Mucosa of descending colon (tissue), 3 donors: ENCODE measurements at regions of chr10 and their contacts with region 1.

Region 1: GRCh38 chr10:88553116-88553752 is 29.9 kb downstream of the RNLS start:
- DNase-seq: peak in 2 of 3 donors; percentile 27 to 73
- ATAC-seq: peak; percentile 92
- H3K4me3 ChIP-seq: no peak overlapping the region
- H3K4me1 ChIP-seq: no peaks in the 10 kb centered on the region
- CTCF ChIP-seq: peak; percentile 51

Region 2: GRCh38 chr10:87842776-87843497 is 710.3 kb before region 1 on chr10:
- intact Hi-C with region 1: loop called (anchors 10 kb)
- DNase-seq: no peak
- ATAC-seq: peak; percentile 25
- H3K4me3 ChIP-seq: no peak overlapping the region
- H3K4me1 ChIP-seq: peaks cover 12% of the 10 kb centered on the region
- CTCF ChIP-seq: no peak

Region 3: GRCh38 chr10:88322324-88323063 is 230.7 kb before region 1 on chr10:
- intact Hi-C with region 1: no loop called
- DNase-seq: no peak
- ATAC-seq: no peak
- H3K4me3 ChIP-seq: no peak overlapping the region
- H3K4me1 ChIP-seq: no peaks in the 10 kb centered on the region
- CTCF ChIP-seq: no peak

Region 4: DNA sequence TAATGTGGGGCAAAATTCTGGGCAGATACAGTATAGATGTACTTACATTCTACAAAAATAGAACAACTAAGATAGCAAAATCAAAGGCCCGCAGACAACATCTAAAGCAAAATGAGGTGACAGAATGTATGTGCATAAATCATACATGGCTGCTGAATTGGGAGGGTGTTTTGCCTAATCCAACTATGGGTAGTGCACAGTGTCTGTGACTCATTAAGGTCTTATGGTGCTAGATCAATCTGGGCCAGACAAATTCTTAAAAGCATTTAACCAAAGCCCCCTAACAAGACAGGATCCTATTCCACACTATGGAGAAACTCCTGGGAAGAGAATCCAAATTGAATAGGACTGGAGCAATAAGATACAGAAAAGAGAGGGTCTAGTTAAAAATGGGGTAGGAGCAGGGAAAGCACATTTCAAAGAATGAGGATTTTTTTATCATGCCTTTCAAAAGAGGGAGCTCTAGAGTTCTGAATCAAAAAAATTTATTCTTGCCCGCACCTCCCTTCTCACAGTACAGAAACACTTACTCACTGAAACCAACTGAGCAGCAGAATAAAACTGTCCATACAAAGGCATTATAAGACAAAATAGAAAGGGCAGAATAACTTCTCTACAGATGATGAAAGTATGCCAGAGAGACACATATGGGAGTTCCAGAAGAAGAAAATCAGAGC is 151.4 kb before region 1 on chr10:
- intact Hi-C with region 1: loop called in 1 of 2 experiments (anchors 10 kb)
- DNase-seq: no peak
- ATAC-seq: no peak
- H3K4me3 ChIP-seq: no peak overlapping the region
- H3K4me1 ChIP-seq: no peaks in the 10 kb centered on the region
- CTCF ChIP-seq: no peak

Region 5: DNA sequence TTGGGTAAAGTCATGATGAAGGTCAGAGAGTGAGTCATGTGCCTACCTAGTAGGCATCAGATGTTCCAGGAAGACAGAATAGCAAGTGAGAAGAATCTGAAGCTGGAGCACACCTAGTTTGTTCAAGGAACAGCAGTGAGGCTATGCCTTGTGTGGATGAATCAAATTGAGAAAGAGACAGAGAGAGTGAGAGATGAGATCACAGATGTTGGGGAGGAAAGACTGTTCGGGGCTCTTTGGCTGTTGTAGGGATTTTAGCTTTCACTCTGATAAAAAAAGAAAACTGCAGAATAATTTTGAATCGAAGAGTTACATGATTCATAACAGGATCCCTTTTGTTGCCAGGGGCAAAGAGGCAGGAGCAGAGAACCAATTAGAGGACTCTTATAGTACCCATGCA is 117.3 kb after region 1 on chr10:
- intact Hi-C with region 1: no loop called
- DNase-seq: no peak
- ATAC-seq: no peak
- H3K4me3 ChIP-seq: no peak overlapping the region
- H3K4me1 ChIP-seq: no peaks in the 10 kb centered on the region
- CTCF ChIP-seq: no peak

Region 6: DNA sequence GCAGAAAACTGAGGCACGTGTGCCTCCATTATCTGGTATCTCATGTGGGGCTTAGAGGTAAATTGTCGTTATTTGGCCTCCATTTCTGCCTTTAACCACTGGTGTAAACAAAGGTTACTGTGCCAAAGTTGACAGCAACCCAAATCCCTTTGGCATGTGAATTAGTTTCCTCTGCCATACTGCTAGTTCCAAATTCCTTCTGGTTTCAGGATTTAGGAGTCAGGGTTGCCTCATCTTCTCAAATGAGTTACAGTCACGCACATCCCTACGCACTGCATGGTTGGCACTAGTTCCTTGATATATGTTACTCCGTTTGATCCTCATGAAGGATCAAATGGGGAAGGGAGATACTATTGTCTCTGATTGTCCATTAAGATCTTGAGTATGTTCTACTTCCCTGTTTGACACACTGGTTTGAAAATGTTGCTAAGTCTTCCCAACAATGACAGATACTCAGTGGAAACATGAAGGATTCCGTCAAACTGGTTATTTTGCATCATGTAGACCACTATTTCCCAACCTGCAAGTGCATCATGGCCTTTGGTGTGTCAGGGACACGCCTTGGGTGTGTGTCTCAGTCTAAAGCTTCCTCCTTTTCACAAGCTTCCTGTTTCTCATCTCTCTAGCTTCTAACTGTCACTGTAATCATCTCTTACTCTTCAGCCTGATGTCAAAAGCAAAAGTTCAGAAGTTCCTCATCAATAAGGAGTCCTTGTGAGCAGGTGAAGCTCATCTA is 206.3 kb after region 1 on chr10 and contains the start of gene LIPN:
- intact Hi-C with region 1: no loop called
- DNase-seq: peak in 1 of 3 donors; percentile 6
- ATAC-seq: peak; percentile 72
- H3K4me3 ChIP-seq: no peak within 1 kb of the TSS
- H3K4me1 ChIP-seq: no peaks in the 10 kb centered on the region
- CTCF ChIP-seq: no peak
- total RNA-seq, gene LIPN: not detected